Right ventricle myocardium superior (tissue), 1 donor: ENCODE measurements at regions of chr1 and their contacts with region 1.

Region 1: DNA sequence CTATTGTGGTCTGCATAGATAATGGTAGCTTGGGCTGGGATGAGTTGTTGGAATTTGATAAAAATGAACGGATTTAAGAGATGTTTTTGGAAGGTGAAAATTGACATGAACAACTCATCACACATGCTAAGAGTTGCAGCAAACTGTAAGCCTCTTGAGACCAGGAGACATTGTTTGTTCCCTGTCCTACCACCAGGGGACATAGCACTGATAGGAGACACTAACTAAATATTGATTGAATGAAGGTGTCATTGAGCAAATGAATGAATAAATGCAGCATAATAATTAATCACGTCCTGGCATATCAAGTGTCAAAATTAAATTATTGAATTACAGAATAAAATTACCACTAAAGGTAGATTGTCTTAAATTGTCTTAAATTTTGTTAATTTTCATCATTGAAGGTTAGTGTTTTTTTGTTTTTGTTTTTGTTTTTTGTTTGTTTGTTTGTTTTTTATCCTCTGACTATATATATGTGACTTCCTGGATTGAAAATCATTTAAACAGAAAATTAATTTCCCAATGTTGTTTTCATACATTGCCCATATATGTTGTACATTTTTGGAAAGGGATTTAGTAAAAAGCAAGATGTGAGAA is 285.3 kb upstream of the C1orf105 start:
- DNase-seq: no peak
- ATAC-seq: peak; percentile 65

Region 2: DNA sequence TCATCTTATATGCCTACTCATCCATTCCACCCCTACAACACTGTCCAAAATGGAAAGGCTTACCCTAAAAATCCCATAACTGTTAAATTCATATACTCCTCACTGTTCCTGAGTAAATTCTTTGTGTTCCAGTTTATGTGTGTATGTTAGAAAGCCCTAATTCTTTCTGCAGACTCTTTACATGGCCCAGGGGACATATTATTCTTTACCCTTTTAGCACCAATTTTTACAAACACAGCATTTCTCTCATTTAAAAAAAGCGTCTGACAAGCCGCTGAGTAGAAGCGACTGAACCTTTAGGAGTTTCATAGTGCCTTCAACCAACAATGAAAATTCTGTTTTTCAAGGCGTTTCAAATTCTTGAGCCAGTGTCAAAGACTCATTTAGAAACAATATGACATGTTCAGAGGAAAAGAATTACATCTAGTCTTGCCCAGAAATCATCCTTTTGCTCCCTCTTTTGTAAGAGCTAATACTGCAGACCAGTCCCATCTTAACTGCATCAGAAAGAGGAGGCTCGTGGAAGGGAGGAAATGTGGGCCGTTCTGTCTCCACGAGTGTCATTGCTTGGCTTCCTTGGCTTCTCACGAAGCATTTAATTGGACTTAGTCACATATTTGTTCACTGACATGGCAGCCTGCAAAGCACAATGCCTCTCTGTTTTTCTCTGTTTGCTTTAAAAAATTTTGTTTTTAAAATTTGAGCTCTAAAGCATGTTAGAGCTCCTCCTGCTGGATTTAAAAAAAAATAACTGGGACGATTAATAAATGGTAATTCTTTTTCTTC is 264.0 kb after region 1 on chr1:
- intact Hi-C with region 1: loop called (anchors 10 kb)
- DNase-seq: no peak
- ATAC-seq: peak; percentile 83

Region 3: GRCh38 chr1:172588296-172589291 is 453.4 kb after region 1 on chr1:
- intact Hi-C with region 1: no loop called
- DNase-seq: no peak
- ATAC-seq: no peak